ENCODE measurements at regions of chr5 and their contacts with region 1.

Region 1: DNA sequence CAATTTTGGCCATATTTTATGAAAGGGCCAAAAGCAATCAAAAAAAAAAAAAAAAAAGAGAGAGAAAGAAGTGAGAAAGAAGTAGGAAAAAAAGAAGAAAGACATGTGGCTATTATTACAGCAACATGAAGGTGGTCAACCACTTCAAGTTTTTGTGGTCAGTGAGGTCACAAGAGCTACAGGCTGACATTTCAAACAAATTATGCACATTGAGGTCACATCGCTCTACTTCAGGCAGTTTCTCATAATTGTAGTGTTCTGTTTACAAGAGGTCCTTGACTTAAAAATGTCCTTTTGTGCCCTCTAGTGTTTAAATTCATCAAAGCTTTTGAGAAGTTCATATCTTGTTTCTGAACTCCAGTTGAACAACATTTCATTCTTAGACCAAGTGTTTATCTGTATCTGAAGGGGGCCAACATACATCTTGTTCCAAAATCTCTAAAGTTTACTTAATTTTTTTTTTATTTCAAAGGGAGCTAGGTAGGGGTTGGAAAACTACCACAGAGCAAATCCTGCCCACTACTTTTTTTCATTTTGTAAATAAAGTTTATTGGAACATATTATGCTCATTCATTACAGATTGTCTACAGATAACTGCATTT is 513.1 kb downstream of the PDE4D start:
- DNase-seq: peak; percentile 64
- ATAC-seq: peak; percentile 85
- H3K4me3 ChIP-seq: no peak overlapping the region
- H3K4me3 Mint-ChIP-seq: no peak overlapping the region
- H3K27ac ChIP-seq: no peak overlapping the region
- H3K27ac Mint-ChIP-seq: no peak overlapping the region
- H3K4me1 ChIP-seq: no peaks in the 10 kb centered on the region
- H3K4me1 Mint-ChIP-seq: peaks cover 5% of the 10 kb centered on the region
- H3K27me3 ChIP-seq: no peaks in the 10 kb centered on the region
- H3K27me3 Mint-ChIP-seq: no peaks in the 10 kb centered on the region
- CTCF ChIP-seq: peak; percentile 72

Region 2: GRCh38 chr5:59039296-59040023 is 341.0 kb before region 1 on chr5:
- CTCF ChIA-PET with region 1: interaction called, 3 read pairs
- POLR2A ChIA-PET with region 1: no interaction called
- intact Hi-C with region 1: loop called (anchors 5 kb)
- DNase-seq: peak; percentile 68
- ATAC-seq: peak; percentile 75
- H3K4me3 ChIP-seq: peak overlapping the region; percentile 31 to 66 (median 53)
- H3K4me3 Mint-ChIP-seq: peak overlapping the region; percentile 96
- H3K27ac ChIP-seq: no peak overlapping the region
- H3K27ac Mint-ChIP-seq: peak overlapping the region; percentile 93
- H3K4me1 ChIP-seq: peaks cover 20% of the 10 kb centered on the region in 2 donors
- H3K4me1 Mint-ChIP-seq: peaks cover 30% of the 10 kb centered on the region
- H3K27me3 ChIP-seq: peaks cover 0 to 27% (median 13%) of the 10 kb centered on the region in 4 experiments
- H3K27me3 Mint-ChIP-seq: peaks cover 28% of the 10 kb centered on the region
- CTCF ChIP-seq: no peak

Region 3: GRCh38 chr5:59312223-59312622 is 68.2 kb before region 1 on chr5:
- CTCF ChIA-PET with region 1: interaction called, 10 read pairs
- POLR2A ChIA-PET with region 1: no interaction called
- intact Hi-C with region 1: no loop called
- DNase-seq: no peak
- ATAC-seq: no peak
- H3K4me3 ChIP-seq: no peak overlapping the region
- H3K4me3 Mint-ChIP-seq: no peak overlapping the region
- H3K27ac ChIP-seq: no peak overlapping the region
- H3K27ac Mint-ChIP-seq: no peak overlapping the region
- H3K4me1 ChIP-seq: no peaks in the 10 kb centered on the region
- H3K4me1 Mint-ChIP-seq: no peaks in the 10 kb centered on the region
- H3K27me3 ChIP-seq: no peaks in the 10 kb centered on the region
- H3K27me3 Mint-ChIP-seq: no peaks in the 10 kb centered on the region
- CTCF ChIP-seq: no peak

Region 4: DNA sequence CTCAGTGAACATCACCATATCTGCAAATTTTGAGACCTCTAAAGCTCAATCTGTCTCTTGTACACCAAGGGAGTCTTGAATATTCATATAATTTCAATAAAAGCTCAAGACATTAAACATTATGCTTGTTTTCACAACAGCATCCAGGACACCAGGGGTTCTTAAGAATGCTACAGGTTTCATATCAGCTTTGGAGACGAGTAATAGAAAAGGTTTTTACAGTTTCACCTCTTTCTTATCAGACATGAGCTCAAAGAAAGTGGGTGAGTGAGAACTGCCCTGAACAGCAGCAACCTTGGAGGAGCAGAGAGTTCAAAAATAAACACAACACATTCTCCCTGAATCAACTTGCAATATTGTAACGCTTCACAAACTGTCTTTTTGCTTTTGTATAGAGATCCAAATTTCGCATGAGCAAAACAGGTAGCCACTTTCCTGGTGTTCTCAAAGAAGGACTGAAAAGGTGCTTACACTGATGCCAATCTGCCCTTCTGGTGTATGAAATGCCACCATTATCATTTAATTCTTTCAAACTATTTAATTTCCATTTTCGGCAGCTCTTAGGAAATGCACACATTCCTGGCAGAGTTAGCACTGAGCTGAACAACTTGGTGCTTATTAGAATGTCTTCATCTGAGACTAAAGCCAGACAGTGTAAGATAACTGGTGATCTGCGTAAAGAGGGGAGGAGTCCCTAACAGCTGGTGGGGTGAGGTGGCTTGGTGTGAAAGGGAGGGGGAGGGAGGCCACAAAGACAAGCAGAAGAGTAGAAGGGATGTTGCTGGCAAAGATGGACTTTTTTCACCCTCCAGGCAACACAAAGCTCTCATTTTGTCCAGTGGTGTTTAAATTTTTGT is 22.2 kb before region 1 on chr5:
- CTCF ChIA-PET with region 1: interaction called, 11 read pairs
- POLR2A ChIA-PET with region 1: no interaction called
- intact Hi-C with region 1: no loop called
- DNase-seq: no peak
- ATAC-seq: no peak
- H3K4me3 ChIP-seq: no peak overlapping the region
- H3K4me3 Mint-ChIP-seq: no peak overlapping the region
- H3K27ac ChIP-seq: no peak overlapping the region
- H3K27ac Mint-ChIP-seq: no peak overlapping the region
- H3K4me1 ChIP-seq: no peaks in the 10 kb centered on the region
- H3K4me1 Mint-ChIP-seq: no peaks in the 10 kb centered on the region
- H3K27me3 ChIP-seq: no peaks in the 10 kb centered on the region
- H3K27me3 Mint-ChIP-seq: no peaks in the 10 kb centered on the region
- CTCF ChIP-seq: no peak

Region 5: DNA sequence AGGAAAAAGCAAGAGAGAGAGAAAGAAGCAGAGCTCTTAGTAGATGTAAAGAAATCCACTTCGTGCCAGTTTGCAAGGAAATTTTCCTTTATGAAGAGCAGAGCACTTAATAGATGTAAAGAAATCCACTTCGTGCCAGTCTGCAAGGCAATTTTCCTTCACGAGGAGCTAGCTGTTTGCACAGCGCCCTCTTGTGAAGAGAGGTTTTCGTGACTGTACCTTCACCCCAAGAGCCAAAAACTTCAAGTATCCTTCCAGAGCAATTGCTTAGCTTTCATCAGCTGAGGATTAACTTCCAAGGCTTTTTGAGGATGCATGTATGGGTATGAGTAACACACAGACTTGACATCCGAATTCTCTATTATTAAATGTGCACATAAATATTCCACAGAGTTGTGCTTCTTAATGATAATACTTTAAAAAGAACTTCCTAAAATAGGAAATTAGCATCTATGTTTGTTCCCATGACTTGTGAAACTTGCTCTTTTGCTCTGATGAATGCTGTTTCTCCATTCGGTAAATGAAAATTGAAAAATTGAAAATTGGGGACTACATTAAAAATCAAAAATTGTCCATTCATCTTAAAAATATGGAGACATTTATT is 12.6 kb before region 1 on chr5:
- CTCF ChIA-PET with region 1: interaction called, 10 read pairs
- POLR2A ChIA-PET with region 1: no interaction called
- intact Hi-C with region 1: no loop called
- DNase-seq: peak; percentile 34
- ATAC-seq: peak; percentile 36
- H3K4me3 ChIP-seq: no peak overlapping the region
- H3K4me3 Mint-ChIP-seq: no peak overlapping the region
- H3K27ac ChIP-seq: no peak overlapping the region
- H3K27ac Mint-ChIP-seq: no peak overlapping the region
- H3K4me1 ChIP-seq: no peaks in the 10 kb centered on the region
- H3K4me1 Mint-ChIP-seq: no peaks in the 10 kb centered on the region
- H3K27me3 ChIP-seq: no peaks in the 10 kb centered on the region
- H3K27me3 Mint-ChIP-seq: peaks cover 3% of the 10 kb centered on the region
- CTCF ChIP-seq: peak; percentile 59

Measured in B cell (primary cell).